Heart right ventricle (tissue), 16 donors: ENCODE measurements at regions of chr9 and their contacts with region 1.

Region 1: DNA sequence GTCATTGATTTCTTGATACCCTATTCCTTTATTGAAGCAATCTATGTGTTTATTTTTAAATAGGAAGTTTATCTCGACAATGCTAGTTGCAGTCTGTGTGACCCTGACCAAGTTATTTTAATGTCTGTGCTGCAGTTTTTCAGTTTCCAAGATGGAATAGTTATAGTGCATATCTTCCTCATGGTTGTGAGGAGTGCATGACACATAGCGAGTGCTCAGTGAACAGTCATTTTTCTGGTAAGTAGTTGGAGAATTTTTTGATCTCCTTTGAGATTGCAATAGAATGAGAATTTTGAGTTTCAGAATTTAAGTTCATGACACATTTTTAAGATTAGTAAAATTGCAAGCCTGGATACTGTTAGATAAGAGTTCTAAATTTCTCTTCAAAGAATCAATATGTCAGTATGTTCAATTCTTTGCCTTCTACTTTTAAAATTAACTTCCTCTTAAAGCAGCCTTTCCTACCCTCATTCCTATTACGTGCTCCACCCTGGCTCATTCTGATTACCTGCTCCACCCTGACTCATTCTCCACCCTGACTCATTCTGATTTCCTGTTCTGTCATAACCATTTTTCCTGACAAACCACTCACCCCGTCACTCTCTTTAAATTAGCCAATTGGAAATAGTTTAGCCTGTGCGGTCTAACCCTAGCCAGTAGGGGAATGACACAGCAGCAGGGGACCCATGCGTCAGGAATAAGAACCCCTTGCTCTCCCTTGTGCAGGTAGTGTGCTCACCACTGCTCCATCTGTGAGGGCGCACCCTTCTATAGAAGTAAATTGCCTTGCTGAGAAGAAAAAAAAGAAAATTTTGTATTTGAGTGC is 30.7 kb downstream of the SPIN1 start:
- DNase-seq: no peak
- ATAC-seq: no peak
- H3K4me3 ChIP-seq: no peak overlapping the region
- H3K27ac ChIP-seq: no peak overlapping the region
- H3K4me1 ChIP-seq: peaks cover 0 to 4% (median 0%) of the 10 kb centered on the region in 9 donors
- H3K27me3 ChIP-seq: no peaks in the 10 kb centered on the region
- CTCF ChIP-seq: no peak

Region 2: GRCh38 chr9:88534456-88535261 is 115.7 kb after region 1 on chr9 and contains the start of gene NXNL2:
- intact Hi-C with region 1: loop called in 1 of 10 experiments (anchors 10 kb)
- DNase-seq: peak; percentile 59 to 79
- ATAC-seq: peak; percentile 44 to 81 (median 70)
- H3K4me3 ChIP-seq: peak within 1 kb of the TSS; percentile 19 to 50 (median 40)
- H3K27ac ChIP-seq: peak within 1 kb of the TSS in 5 of 10 donors; percentile 22 to 67 (median 48)
- H3K4me1 ChIP-seq: peaks cover 6 to 37% (median 14%) of the 10 kb centered on the region in 9 donors
- H3K27me3 ChIP-seq: peaks cover 5 to 61% (median 36%) of the 10 kb centered on the region in 7 donors
- CTCF ChIP-seq: no peak
- total RNA-seq, gene NXNL2: not detected